Right cardiac atrium (tissue), 5 donors: ENCODE measurements at regions of chr7 and their contacts with region 1.

Region 1: DNA sequence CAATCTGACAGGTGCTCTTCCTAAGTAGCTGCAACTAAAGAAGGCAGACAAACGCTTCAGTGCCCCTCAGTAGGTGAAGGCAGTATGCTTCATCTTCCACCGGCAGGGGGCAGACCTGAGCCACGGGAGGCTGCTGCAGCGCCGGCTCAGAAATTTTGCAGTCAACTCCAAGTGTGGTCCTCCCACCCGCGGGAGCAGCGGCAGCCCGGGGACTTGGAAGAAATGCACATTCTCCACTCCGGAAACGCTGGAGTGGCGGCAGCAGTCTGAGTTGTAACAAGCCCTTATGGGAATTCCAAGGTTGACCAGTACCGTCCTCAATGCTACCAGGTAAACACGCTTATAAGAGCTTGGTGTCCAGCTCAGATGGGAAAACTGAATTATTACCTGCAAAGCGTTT is 3.4 kb downstream of the IGFBP3 start:
- DNase-seq: peak; percentile 82 to 93 (median 91)
- ATAC-seq: peak; percentile 29 to 57
- H3K4me3 ChIP-seq: peak overlapping the region; percentile 9
- H3K27ac ChIP-seq: no peak overlapping the region
- H3K4me1 ChIP-seq: peaks cover 5% of the 10 kb centered on the region
- H3K27me3 ChIP-seq: no peaks in the 10 kb centered on the region

Region 2: DNA sequence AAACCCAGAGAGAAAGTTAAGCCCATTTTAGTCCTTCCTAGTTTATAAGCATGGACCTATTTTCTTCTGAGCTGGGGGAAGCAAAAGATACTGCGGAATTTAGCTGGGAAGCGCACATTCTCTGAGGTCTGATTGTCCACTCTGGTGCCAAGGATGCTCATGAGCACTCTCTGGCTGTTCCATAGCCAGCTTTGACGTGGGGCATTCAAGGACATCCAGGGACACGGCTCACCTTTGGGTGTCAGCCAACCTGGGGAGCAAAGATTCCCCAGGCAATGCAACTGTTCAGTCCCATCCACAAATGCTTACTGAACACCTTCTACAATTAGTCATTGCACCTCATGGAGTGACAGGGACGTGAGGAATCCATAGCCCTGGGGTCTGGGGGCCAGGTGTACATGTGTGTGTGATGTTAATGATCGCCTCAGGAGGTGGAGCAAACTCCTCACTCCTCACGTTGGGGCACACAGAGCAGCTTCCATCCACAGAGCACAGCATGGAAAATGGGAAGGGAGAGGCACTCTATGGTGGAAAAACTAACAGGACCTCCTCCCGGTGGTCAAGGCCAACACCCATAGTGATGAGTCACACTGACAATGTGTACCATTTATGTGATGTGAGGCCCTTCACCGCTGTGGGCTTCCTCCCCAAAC is 70.9 kb after region 1 on chr7:
- intact Hi-C with region 1: no loop called
- DNase-seq: no peak
- ATAC-seq: peak in 1 of 2 donors; percentile 65
- H3K4me3 ChIP-seq: no peak overlapping the region
- H3K27ac ChIP-seq: no peak overlapping the region
- H3K4me1 ChIP-seq: peaks cover 4% of the 10 kb centered on the region
- H3K27me3 ChIP-seq: no peaks in the 10 kb centered on the region

Region 3: GRCh38 chr7:46058086-46058823 is 140.6 kb after region 1 on chr7:
- intact Hi-C with region 1: no loop called
- DNase-seq: no peak
- ATAC-seq: no peak
- H3K4me3 ChIP-seq: no peak overlapping the region
- H3K27ac ChIP-seq: no peak overlapping the region
- H3K4me1 ChIP-seq: no peaks in the 10 kb centered on the region
- H3K27me3 ChIP-seq: no peaks in the 10 kb centered on the region

Region 4: GRCh38 chr7:47232751-47233412 is 1315.2 kb after region 1 on chr7:
- intact Hi-C with region 1: loop called in 1 of 4 experiments (anchors 10 kb)
- DNase-seq: no peak
- ATAC-seq: no peak
- H3K4me3 ChIP-seq: no peak overlapping the region
- H3K27ac ChIP-seq: no peak overlapping the region
- H3K4me1 ChIP-seq: peaks cover 5% of the 10 kb centered on the region
- H3K27me3 ChIP-seq: no peaks in the 10 kb centered on the region